Naive thymus-derived CD4-positive, alpha-beta T cell (primary cell): ENCODE measurements at regions of chr16 and their contacts with region 1.

Region 1: DNA sequence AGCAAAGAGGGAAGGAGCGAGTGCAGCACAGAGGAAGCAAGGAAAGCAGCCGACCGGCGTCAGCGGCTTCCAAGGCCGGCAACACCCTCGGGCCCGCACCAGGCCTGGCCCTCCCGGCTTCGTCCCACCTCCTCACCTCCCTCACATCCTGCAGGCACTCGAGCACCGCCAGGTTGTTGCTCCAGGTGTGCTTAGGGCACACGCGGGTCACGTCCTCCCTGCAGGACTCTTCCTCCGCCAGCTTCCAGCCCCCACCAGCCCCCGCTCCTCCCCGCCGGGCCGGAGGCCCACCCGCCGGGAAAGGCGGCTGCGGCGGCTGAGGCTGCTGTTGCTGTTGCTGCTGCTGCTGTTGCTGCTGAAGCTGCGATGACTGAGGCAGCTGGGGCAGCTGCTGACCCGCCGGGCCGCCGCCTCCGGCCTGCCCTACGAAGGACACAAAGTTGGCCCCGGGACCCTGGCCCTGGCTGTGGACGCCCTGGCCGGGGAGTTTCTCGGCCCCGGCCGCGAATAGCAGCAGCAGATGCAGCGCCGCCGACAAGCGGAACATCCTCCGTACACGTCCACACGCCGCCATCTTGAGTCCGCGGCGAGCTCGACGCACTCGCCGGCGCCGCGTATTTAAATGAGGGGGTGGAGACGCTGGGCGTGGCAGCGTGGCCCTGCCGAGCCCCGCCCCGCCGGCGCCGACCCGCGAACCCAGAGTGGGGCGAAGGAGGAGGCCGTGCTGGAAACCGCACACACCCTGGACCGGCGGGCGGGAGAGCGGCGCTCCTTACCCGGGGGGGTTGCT is at the start of gene GLG1:
- DNase-seq: peak; percentile 86 to 94 (median 92)
- ATAC-seq: peak; percentile 97
- H3K4me3 ChIP-seq: peak within 1 kb of the TSS; percentile 78
- H3K4me3 Mint-ChIP-seq: peak within 1 kb of the TSS; percentile 92 to 100 (median 98)
- H3K27ac ChIP-seq: peak within 1 kb of the TSS; percentile 91
- H3K27ac Mint-ChIP-seq: peak within 1 kb of the TSS; percentile 86 to 99 (median 96)
- H3K4me1 ChIP-seq: peaks cover 36 to 46% of the 10 kb centered on the region in 2 donors
- H3K4me1 Mint-ChIP-seq: peaks cover 48 to 74% (median 62%) of the 10 kb centered on the region in 7 donors
- H3K27me3 ChIP-seq: no peaks in the 10 kb centered on the region
- H3K27me3 Mint-ChIP-seq: no peaks in the 10 kb centered on the region
- total RNA-seq, gene GLG1: 125 to 198 (median 188) TPM

Region 2: DNA sequence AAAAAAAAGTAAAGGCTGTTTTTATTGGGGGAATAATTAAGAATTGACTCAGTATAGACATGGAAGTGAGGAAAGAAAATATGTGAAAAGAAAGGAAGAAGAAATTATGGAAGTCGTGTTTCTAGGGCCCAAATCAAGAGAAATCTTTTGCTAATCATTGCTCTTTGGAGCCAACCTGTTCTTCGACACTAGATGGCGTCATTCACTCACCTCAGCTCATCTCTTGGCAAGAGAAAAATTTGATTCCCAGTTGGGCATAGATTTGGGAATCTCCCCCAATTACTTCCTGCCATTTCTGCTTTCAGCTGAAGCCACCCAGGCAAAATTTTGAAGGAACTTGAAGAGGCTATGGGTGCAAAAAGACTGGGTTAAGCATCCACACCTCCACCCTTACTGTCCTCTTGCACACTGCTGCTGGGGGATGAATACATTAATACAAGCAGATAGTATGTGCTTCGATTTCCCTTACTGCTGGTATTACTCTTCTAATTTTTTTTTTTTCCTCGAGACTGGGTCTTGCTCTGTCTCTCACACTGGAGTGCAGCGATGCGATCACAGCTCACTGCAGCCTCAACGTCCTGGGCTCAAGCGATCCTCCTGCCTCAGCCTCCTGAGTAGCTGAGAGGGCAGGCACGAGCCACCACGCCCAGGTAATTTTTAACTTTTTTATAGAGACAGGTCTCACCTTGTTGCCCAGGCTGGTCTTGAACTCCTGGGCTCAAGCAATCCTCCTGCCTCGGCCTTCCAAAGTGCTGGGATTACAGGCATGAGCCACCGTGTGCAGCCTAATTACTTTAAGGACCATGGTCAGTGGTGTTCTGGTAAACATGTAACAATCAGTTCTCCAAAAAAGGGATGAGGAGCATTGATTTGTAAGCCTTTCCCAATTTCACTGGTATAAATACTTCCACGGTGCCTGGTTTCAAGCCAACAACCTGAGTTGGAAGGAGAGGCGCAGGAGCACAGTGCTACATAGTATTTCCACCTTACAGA is 296.6 kb before region 1 on chr16:
- CTCF ChIA-PET with region 1: no interaction called
- POLR2A ChIA-PET with region 1: no interaction called
- intact Hi-C with region 1: no loop called
- DNase-seq: peak in 4 of 9 donors; percentile 17 to 44 (median 26)
- ATAC-seq: peak; percentile 64
- H3K4me3 ChIP-seq: no peak overlapping the region
- H3K4me3 Mint-ChIP-seq: no peak overlapping the region
- H3K27ac ChIP-seq: no peak overlapping the region
- H3K27ac Mint-ChIP-seq: no peak overlapping the region
- H3K4me1 ChIP-seq: no peaks in the 10 kb centered on the region
- H3K4me1 Mint-ChIP-seq: peaks cover 0 to 4% (median 2%) of the 10 kb centered on the region in 7 donors
- H3K27me3 ChIP-seq: no peaks in the 10 kb centered on the region
- H3K27me3 Mint-ChIP-seq: no peaks in the 10 kb centered on the region

Region 3: DNA sequence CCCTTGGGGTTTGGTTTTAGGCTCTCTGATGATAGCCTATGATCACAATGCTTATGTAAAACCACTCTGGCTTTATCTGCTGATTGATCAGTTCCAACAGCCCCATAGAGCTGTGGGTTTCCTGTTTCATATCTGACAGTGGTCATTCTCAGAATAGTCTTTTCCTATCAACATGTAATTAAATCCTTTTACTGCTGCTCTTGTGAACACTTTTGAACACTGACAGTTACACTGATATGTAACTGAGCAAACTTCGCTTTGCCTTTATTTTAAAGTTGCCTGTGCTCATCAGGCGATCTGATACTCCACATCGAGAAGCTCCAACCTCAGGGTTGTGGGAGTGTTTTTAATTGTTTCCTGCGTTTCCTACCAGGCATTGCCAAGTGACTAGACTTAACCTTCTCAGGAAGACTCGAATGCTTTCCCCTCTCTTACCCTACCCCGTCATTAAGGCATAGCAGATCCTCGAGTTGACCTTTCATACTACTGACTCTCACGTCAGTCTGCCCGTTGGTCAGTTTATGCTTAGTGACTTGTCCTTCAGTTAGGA is 168.1 kb before region 1 on chr16:
- CTCF ChIA-PET with region 1: no interaction called
- POLR2A ChIA-PET with region 1: no interaction called
- intact Hi-C with region 1: loop called in 1 of 2 experiments (anchors 10 kb)
- DNase-seq: no peak
- ATAC-seq: peak; percentile 63
- H3K4me3 ChIP-seq: no peak overlapping the region
- H3K4me3 Mint-ChIP-seq: peak overlapping the region in 2 of 10 donors; percentile 51 to 80
- H3K27ac ChIP-seq: no peak overlapping the region
- H3K27ac Mint-ChIP-seq: peak overlapping the region in 7 of 9 donors; percentile 27 to 89 (median 34)
- H3K4me1 ChIP-seq: peaks cover 5 to 8% of the 10 kb centered on the region in 2 donors
- H3K4me1 Mint-ChIP-seq: peaks cover 8 to 24% (median 14%) of the 10 kb centered on the region in 7 donors
- H3K27me3 ChIP-seq: no peaks in the 10 kb centered on the region
- H3K27me3 Mint-ChIP-seq: no peaks in the 10 kb centered on the region

Region 4: DNA sequence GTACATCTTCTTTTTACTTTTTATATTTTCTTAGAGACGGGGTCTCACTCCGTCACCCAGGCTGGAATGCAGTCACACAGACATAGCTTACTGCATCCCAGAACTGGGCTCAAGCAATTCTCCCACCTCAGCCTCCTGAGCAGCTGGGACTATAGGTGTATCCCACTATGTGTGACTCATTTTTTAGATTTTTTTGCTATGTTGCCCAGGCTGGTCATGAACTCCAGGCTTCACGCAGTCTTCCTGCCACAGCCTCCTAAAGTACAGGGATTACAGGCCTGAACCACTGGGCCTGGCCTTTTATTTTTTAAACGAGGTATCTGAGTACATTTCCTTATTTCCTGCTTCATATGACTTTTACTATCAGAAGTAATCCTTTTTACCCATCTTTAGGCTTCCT is 47.8 kb before region 1 on chr16:
- CTCF ChIA-PET with region 1: no interaction called
- POLR2A ChIA-PET with region 1: interaction called, 4 read pairs
- intact Hi-C with region 1: loop called in 1 of 2 experiments (anchors 2 kb)
- DNase-seq: no peak
- ATAC-seq: no peak
- H3K4me3 ChIP-seq: no peak overlapping the region
- H3K4me3 Mint-ChIP-seq: peak overlapping the region in 7 of 10 donors; percentile 5 to 69 (median 34)
- H3K27ac ChIP-seq: peak overlapping the region; percentile 40
- H3K27ac Mint-ChIP-seq: peak overlapping the region; percentile 14 to 89 (median 59)
- H3K4me1 ChIP-seq: peaks cover 6 to 34% of the 10 kb centered on the region in 2 donors
- H3K4me1 Mint-ChIP-seq: peaks cover 31 to 79% (median 68%) of the 10 kb centered on the region in 7 donors
- H3K27me3 ChIP-seq: no peaks in the 10 kb centered on the region
- H3K27me3 Mint-ChIP-seq: no peaks in the 10 kb centered on the region

Region 5: GRCh38 chr16:74617206-74617788 is 10.6 kb after region 1 on chr16:
- CTCF ChIA-PET with region 1: interaction called, 4 read pairs
- POLR2A ChIA-PET with region 1: interaction called, 23 read pairs
- intact Hi-C with region 1: no loop called
- DNase-seq: no peak
- ATAC-seq: no peak
- H3K4me3 ChIP-seq: no peak overlapping the region
- H3K4me3 Mint-ChIP-seq: no peak overlapping the region
- H3K27ac ChIP-seq: no peak overlapping the region
- H3K27ac Mint-ChIP-seq: peak overlapping the region in 4 of 9 donors; percentile 21 to 43 (median 28)
- H3K4me1 ChIP-seq: no peaks in the 10 kb centered on the region
- H3K4me1 Mint-ChIP-seq: peaks cover 0 to 15% (median 9%) of the 10 kb centered on the region in 7 donors
- H3K27me3 ChIP-seq: no peaks in the 10 kb centered on the region
- H3K27me3 Mint-ChIP-seq: no peaks in the 10 kb centered on the region

Region 6: DNA sequence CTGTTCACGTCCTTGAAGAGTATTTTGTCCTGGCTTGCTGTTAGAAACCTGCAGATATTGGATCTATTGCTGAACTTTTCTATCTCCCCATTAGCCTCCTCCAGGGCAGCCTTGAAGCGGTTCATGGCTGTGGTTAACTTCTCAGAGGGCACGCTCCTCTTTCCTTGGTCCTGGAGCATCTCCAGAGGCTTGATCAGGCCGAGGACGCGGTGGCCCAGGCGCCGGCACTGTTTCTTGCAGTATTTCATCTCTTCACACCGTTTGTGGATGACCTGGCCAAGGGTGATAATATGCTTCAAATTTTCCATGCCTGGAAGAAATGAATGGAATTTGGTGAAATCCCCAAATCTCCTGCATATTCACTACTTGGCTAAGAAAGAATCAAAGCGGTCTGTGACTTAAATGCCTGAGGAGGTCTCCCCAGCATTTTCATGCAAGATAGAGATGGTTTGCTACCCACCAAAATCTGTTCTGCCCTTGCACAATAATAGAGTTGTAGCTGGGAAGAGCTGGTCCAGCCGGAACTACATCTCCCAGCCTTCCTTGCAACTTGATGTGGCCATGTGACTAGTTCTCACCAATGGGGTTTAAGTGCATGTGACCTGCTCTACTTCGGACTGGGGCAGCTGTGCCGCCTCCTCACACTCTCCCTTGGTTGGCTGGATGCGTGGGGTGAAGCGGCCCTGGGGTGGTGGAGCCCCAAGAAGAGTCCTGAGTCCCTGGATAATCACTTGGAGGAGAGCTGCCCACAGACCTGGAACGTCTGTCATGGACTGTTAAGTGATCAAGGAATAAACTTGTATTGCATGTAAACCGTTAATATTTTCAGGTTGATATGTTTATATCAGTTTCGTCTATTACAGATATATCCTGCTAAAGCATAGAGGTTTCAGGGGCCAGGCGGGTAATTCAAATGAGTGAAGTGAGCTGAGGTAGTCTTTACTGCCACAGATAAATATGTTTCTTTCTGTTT is 89.0 kb after region 1 on chr16:
- CTCF ChIA-PET with region 1: no interaction called
- POLR2A ChIA-PET with region 1: no interaction called
- intact Hi-C with region 1: loop called in 1 of 2 experiments (anchors 2 kb)
- DNase-seq: peak; percentile 33 to 67 (median 51)
- ATAC-seq: peak; percentile 89
- H3K4me3 ChIP-seq: peak overlapping the region; percentile 45
- H3K4me3 Mint-ChIP-seq: peak overlapping the region; percentile 74 to 94 (median 85)
- H3K27ac ChIP-seq: peak overlapping the region; percentile 45
- H3K27ac Mint-ChIP-seq: peak overlapping the region in 8 of 9 donors; percentile 43 to 87 (median 80)
- H3K4me1 ChIP-seq: peaks cover 14 to 24% of the 10 kb centered on the region in 2 donors
- H3K4me1 Mint-ChIP-seq: peaks cover 35 to 74% (median 59%) of the 10 kb centered on the region in 7 donors
- H3K27me3 ChIP-seq: no peaks in the 10 kb centered on the region
- H3K27me3 Mint-ChIP-seq: no peaks in the 10 kb centered on the region

Region 7: GRCh38 chr16:74709441-74709877 is 102.7 kb after region 1 on chr16:
- CTCF ChIA-PET with region 1: no interaction called
- POLR2A ChIA-PET with region 1: no interaction called
- intact Hi-C with region 1: no loop called
- DNase-seq: peak; percentile 62 to 86 (median 78)
- ATAC-seq: peak; percentile 99
- H3K4me3 ChIP-seq: no peak overlapping the region
- H3K4me3 Mint-ChIP-seq: no peak overlapping the region
- H3K27ac ChIP-seq: no peak overlapping the region
- H3K27ac Mint-ChIP-seq: peak overlapping the region in 5 of 9 donors; percentile 3 to 85 (median 29)
- H3K4me1 ChIP-seq: no peaks in the 10 kb centered on the region
- H3K4me1 Mint-ChIP-seq: peaks cover 4 to 10% (median 6%) of the 10 kb centered on the region in 7 donors
- H3K27me3 ChIP-seq: no peaks in the 10 kb centered on the region
- H3K27me3 Mint-ChIP-seq: peaks cover 0 to 6% (median 0%) of the 10 kb centered on the region in 5 donors

Region 8: DNA sequence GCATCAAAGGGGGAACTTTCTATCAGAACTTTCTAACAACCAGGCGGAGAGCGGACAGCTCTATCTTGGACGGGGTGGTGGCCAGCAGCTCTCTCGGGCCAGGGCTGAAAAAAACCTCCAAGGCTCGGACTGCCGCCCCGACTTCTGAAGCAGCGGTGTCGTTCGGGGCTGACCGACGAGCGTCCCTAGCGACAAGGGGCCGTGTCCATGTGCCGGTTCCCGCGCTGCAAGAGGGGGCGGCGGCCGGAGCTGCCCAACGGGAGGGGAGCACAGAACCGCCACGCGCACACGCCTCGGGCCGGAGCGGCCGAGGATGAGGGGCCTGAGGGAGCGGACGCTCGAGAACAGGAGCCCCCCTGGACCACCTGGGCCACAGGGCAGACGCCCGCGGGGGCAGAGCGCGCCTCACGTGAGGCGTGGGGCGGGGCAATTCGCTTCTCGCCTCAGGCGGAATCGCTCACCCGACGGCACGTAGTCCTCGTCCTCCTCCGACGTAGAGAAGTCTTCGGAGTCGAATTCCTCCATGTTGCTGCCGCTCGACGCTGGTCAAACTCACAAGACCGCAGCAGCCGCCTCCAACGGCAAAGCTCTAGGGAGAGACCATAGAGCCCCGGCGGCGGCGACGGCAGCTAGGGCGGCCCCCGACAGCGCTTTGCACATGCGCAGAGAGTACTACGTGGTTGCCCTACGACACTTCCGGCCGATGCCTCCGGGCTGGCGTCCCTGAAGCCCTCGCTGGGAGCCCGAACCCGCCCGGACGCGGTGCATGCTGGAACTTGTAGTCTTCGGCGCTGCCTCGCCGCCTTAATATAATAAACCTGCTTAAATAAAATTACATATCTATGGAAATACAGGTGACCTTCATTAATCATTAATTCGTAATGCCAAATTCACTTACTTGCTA is 826.4 kb after region 1 on chr16 and contains the start of gene CFDP1:
- CTCF ChIA-PET with region 1: no interaction called
- POLR2A ChIA-PET with region 1: no interaction called
- intact Hi-C with region 1: loop called (anchors 2 kb)
- DNase-seq: peak; percentile 93 to 98 (median 95)
- ATAC-seq: peak; percentile 92
- H3K4me3 ChIP-seq: peak within 1 kb of the TSS; percentile 92
- H3K4me3 Mint-ChIP-seq: peak within 1 kb of the TSS; percentile 87 to 99 (median 94)
- H3K27ac ChIP-seq: peak within 1 kb of the TSS; percentile 94
- H3K27ac Mint-ChIP-seq: peak within 1 kb of the TSS; percentile 94 to 100 (median 97)
- H3K4me1 ChIP-seq: peaks cover 5 to 9% of the 10 kb centered on the region in 2 donors
- H3K4me1 Mint-ChIP-seq: peaks cover 19 to 53% (median 43%) of the 10 kb centered on the region in 7 donors
- H3K27me3 ChIP-seq: no peaks in the 10 kb centered on the region
- H3K27me3 Mint-ChIP-seq: no peaks in the 10 kb centered on the region
- total RNA-seq, gene CFDP1: 34.9 to 41.4 (median 39.4) TPM

Region 9: GRCh38 chr16:75647492-75648264 is 1041.0 kb after region 1 on chr16 and contains the starts of genes KARS1 and TERF2IP:
- CTCF ChIA-PET with region 1: no interaction called
- POLR2A ChIA-PET with region 1: interaction called, 6 read pairs
- intact Hi-C with region 1: loop called in 1 of 2 experiments (anchors 1 kb)
- DNase-seq: peak; percentile 86 to 96 (median 96)
- ATAC-seq: peak; percentile 93
- H3K4me3 ChIP-seq: peak within 1 kb of the TSS; percentile 97
- H3K4me3 Mint-ChIP-seq: peak within 1 kb of the TSS; percentile 90 to 100 (median 99)
- H3K27ac ChIP-seq: peak within 1 kb of the TSS; percentile 97
- H3K27ac Mint-ChIP-seq: peak within 1 kb of the TSS; percentile 96 to 100 (median 99)
- H3K4me1 ChIP-seq: peaks cover 36 to 48% of the 10 kb centered on the region in 2 donors
- H3K4me1 Mint-ChIP-seq: peaks cover 35 to 76% (median 67%) of the 10 kb centered on the region in 7 donors
- H3K27me3 ChIP-seq: no peaks in the 10 kb centered on the region
- H3K27me3 Mint-ChIP-seq: no peaks in the 10 kb centered on the region
- total RNA-seq, gene KARS1: 118 to 216 (median 123) TPM
- total RNA-seq, gene TERF2IP: 70.8 to 90.4 (median 88.7) TPM